Activated CD4-positive, alpha-beta memory T cell treated with anti-CD3 and anti-CD28 coated beads, Interleukin-2, amount 10 ng/mL, durations not matched to agents 7 days and 5 days (primary cell): ENCODE measurements at regions of chr4 and their contacts with region 1.

Region 1: GRCh38 chr4:16217300-16218051 is 8.8 kb downstream of the TAPT1 start:
- DNase-seq: no peak
- H3K4me3 Mint-ChIP-seq: no peak overlapping the region
- H3K27ac Mint-ChIP-seq: peak overlapping the region; percentile 9
- H3K4me1 Mint-ChIP-seq: peaks cover 55% of the 10 kb centered on the region
- H3K27me3 Mint-ChIP-seq: no peaks in the 10 kb centered on the region

Region 2: GRCh38 chr4:16129336-16129735 is 88.1 kb before region 1 on chr4:
- CTCF ChIA-PET with region 1: no interaction called
- POLR2A ChIA-PET with region 1: no interaction called
- DNase-seq: no peak
- H3K4me3 Mint-ChIP-seq: no peak overlapping the region
- H3K27ac Mint-ChIP-seq: no peak overlapping the region
- H3K4me1 Mint-ChIP-seq: no peaks in the 10 kb centered on the region
- H3K27me3 Mint-ChIP-seq: no peaks in the 10 kb centered on the region

Region 3: DNA sequence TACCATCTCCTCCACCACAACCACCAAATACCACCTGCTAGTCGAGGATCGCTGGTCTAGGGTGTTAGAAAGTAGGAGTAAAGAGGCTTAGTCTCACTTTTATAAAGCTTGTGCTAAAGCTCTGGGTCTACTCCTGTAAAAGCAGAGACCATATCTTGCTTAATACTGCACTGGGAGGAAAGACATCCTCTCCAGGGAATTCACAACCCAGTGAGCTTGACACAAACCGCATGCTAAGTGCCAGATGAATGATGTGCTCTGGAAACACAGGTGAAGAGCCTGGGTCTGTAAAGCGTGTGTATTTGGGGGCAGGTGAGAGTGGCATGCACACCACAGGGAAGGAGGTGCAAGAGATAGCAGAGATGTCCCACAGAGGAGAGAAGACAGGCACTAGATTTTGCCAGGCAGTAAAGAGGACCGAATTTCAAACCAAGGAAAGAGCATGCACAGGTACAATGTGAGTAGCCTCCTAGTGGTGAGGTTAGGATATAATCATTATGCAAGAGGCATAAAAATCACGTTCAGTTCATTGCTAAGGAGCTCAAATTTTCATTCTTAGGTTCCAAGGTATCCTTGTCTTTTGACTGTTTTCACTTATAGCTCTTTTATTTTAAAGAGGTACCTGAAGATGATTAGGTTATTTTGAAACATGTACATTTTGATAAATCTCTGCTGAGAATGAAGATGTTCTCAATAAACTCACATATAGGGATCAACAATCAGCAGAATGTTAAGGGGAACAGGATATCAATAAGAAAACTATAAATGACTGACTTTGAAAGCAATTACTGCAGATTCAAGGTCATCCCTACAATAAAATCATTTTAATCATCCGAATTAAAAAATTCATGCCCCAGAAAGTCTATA is 11.9 kb before region 1 on chr4:
- CTCF ChIA-PET with region 1: interaction called, 18 read pairs
- POLR2A ChIA-PET with region 1: interaction called, 4 read pairs
- DNase-seq: no peak
- H3K4me3 Mint-ChIP-seq: no peak overlapping the region
- H3K27ac Mint-ChIP-seq: no peak overlapping the region
- H3K4me1 Mint-ChIP-seq: peaks cover 23% of the 10 kb centered on the region
- H3K27me3 Mint-ChIP-seq: no peaks in the 10 kb centered on the region